BJ (cell line): ENCODE measurements at regions of chr6 and their contacts with region 1.

Region 1: DNA sequence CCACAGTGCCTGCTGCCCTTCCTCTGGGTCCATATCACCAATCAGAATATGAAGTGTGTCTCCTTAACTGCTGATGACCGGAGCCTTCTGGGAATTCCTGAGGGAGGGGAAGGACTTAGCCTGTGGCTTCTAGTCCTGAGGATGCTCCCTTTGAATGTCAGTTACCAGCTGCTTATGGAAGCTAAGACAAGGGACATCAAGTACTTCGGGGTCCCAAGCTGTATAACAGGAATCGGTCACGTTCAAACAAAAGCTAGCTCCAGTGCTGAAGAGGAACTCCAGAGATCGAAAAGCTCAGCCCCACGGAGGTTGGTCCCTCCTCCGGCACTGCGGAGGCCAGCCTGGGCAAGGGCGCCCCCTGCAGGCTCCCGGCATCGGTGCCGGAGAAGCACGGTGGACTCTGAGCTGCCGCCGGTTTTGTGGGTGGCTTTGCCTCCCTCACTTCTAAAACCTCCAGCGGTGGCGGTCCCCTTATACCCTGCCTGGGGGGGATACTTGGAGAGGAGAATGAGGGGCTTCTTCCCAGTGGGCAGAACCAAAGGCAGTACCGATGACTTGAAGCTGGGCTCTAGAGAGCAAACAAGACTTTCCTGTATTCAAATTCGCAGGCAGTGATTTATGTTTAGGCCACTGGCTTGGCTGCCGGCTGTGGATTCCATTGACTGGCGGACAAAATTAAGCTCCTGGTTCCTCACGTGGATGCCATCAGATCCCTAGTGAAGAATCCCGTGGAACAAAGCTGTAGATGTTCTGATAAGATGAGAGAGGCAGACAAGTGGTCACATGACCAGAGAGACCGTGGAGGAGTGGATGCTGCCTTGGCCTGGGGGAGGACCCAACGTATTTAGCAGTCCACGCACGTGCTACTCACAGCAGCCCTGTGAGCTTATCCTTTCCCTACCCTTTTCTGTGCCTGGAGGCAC is 16.2 kb upstream of the UBR2 start:
- DNase-seq: no peak
- H3K4me3 ChIP-seq: peak overlapping the region; percentile 45
- H3K27me3 ChIP-seq: no peaks in the 10 kb centered on the region
- CTCF ChIP-seq: peak; percentile 100

Region 2: GRCh38 chr6:42166444-42167141 is 381.1 kb before region 1 on chr6:
- CTCF ChIA-PET with region 1: interaction called, 16 read pairs
- POLR2A ChIA-PET with region 1: no interaction called
- DNase-seq: no peak
- H3K4me3 ChIP-seq: no peak overlapping the region
- H3K27me3 ChIP-seq: peaks cover 5% of the 10 kb centered on the region; the same call in 1 of the 2 replicates
- CTCF ChIP-seq: peak; percentile 94

Region 3: GRCh38 chr6:42260972-42261371 is 286.7 kb before region 1 on chr6:
- CTCF ChIA-PET with region 1: interaction called, 63 read pairs
- POLR2A ChIA-PET with region 1: no interaction called
- DNase-seq: no peak
- H3K4me3 ChIP-seq: no peak overlapping the region
- H3K27me3 ChIP-seq: no peaks in the 10 kb centered on the region
- CTCF ChIP-seq: peak; percentile 61

Region 4: DNA sequence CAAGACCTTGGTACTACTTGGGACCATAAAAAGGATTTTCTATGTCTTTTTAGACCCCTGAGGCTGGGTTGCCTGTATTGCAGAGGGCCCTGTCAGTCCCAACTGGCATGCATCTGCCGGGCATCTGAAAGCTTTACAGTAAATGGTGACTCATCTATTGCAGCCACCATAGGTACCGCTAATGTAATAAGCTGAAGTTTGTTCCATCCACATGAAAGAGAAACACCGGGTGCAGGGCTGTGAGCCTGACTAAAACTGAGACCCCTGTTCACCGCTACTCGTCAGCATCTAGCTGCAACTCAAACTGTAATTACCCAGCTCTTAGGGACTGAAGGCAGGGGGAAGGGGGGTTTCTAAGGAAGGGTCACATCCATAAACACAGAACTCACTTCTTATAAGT is 145.5 kb before region 1 on chr6:
- CTCF ChIA-PET with region 1: interaction called, 11 read pairs
- POLR2A ChIA-PET with region 1: no interaction called
- DNase-seq: no peak
- H3K4me3 ChIP-seq: no peak overlapping the region
- H3K27me3 ChIP-seq: no peaks in the 10 kb centered on the region
- CTCF ChIP-seq: no peak

Region 5: GRCh38 chr6:42532038-42532669 is 15.5 kb before region 1 on chr6:
- CTCF ChIA-PET with region 1: interaction called, 34 read pairs
- POLR2A ChIA-PET with region 1: no interaction called
- DNase-seq: no peak
- H3K4me3 ChIP-seq: no peak overlapping the region
- H3K27me3 ChIP-seq: no peaks in the 10 kb centered on the region
- CTCF ChIP-seq: peak; percentile 79

Region 6: DNA sequence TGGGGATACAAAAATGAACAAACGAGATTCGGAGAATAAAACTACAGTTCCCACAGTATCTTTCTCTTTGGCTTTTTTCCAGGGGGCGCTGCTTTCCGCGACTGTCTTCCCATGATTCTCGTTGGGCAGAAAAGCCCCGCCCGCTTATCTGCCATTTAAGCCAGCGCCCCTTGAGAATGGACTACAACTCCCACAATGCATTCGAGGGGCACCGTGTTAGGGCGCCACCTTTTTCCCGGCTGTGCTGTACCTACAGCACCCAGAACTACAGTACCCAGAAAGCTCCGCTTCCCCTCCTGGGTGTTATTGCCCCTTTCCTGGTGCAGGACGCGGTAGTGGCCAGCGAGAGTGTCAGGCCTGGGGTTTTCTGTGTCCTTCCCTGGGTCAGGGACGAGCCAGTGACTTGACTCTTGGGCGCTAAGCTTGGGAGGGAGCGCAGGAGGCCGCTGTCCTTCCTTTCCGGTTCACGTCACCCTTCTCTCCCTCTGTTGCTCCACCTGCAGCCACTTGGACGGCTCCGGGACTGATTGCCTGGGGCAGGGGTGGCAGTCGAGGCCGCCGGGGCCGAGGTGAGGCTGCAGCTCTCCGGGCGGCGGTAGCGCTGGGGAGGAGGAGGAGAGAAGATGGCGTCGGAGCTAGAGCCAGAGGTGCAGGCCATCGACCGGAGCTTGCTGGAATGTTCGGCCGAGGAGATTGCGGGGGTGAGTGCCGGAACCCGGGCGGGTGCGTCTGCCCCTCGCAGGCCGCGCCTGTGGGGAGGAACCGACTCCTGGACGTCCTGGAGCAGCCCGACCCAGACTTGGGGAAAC is 16.2 kb after region 1 on chr6 and contains the start of gene UBR2:
- CTCF ChIA-PET with region 1: interaction called, 39 read pairs
- POLR2A ChIA-PET with region 1: interaction called, 4 read pairs
- DNase-seq: peak; percentile 95
- H3K4me3 ChIP-seq: peak within 1 kb of the TSS; percentile 95
- H3K27me3 ChIP-seq: no peaks in the 10 kb centered on the region
- CTCF ChIP-seq: peak; percentile 41
- polyA plus RNA-seq, gene UBR2: 9.8 and 18.2 TPM in 2 replicates